Activated naive CD4-positive, alpha-beta T cell treated with anti-CD3 and anti-CD28 coated beads for 36 hours (primary cell): ENCODE measurements at regions of chr3 and their contacts with region 1.

Region 1: GRCh38 chr3:16467393-16467792 is 46.1 kb downstream of the RFTN1 start:
- DNase-seq: peak; percentile 84
- H3K4me3 Mint-ChIP-seq: peak overlapping the region; percentile 50
- H3K27ac Mint-ChIP-seq: peak overlapping the region; percentile 79
- H3K4me1 Mint-ChIP-seq: peaks cover 66% of the 10 kb centered on the region
- H3K27me3 Mint-ChIP-seq: no peaks in the 10 kb centered on the region

Region 2: DNA sequence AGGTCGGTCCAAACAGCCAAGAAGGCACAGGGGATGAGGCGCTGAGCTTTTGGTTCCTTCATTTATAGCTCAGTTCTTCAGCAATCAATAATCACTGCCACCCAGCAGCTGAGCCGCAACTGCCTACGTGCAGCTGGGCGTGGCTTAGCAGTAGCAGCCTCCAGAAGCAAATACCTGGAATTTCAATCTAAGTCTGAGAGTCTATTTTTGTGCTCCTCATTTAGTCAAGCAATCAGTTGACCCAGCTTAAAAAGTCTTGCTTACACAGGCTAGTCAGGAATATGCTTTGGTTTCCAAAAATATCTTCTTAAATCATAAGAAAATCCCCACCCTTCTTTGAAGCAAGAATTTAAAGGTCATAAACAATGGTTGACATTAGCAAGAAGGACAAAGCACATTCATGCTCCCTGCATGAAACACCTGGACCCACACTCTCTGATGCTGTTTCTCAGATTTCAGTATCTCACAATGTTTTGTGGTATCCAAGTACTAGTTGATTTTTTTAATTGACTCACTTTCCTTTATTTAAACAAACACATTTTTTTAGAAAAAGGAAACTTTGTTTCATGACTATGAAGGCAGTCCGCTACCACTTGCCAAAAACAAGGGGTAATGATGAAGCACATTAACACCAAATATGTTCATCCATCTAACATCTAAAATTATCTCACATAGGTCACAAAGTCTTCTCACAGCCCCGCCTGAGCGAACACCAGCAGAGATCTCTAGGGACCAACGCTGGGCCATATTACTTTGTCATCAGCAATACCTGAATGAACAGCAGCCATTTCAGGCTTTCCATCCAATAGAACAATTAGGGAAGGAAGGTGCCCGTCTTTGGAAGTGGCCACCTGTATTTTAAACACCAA is 96.3 kb before region 1 on chr3:
- CTCF ChIA-PET with region 1: no interaction called
- intact Hi-C with region 1: loop called (anchors 2 kb)
- DNase-seq: peak; percentile 35
- H3K4me3 Mint-ChIP-seq: no peak overlapping the region
- H3K27ac Mint-ChIP-seq: peak overlapping the region; percentile 76
- H3K4me1 Mint-ChIP-seq: peaks cover 72% of the 10 kb centered on the region
- H3K27me3 Mint-ChIP-seq: no peaks in the 10 kb centered on the region